ENCODE measurements at regions of chr6 and their contacts with region 1.

Region 1: GRCh38 chr6:41787219-41787917 is at the start of gene TOMM6:
- DNase-seq: peak; percentile 95
- H3K4me3 Mint-ChIP-seq: peak within 1 kb of the TSS; percentile 97
- H3K27ac Mint-ChIP-seq: peak within 1 kb of the TSS; percentile 98
- H3K4me1 Mint-ChIP-seq: peaks cover 10% of the 10 kb centered on the region
- H3K27me3 Mint-ChIP-seq: peaks cover 1% of the 10 kb centered on the region
- total RNA-seq, gene TOMM6: 167 to 202 TPM

Region 2: GRCh38 chr6:41756354-41756753 is 31.0 kb before region 1 on chr6:
- CTCF ChIA-PET with region 1: no interaction called
- POLR2A ChIA-PET with region 1: no interaction called
- DNase-seq: no peak
- H3K4me3 Mint-ChIP-seq: no peak overlapping the region
- H3K27ac Mint-ChIP-seq: no peak overlapping the region
- H3K4me1 Mint-ChIP-seq: no peaks in the 10 kb centered on the region
- H3K27me3 Mint-ChIP-seq: peaks cover 9% of the 10 kb centered on the region

Region 3: GRCh38 chr6:41775293-41776181 is 11.8 kb before region 1 on chr6:
- CTCF ChIA-PET with region 1: interaction called, 49 read pairs
- POLR2A ChIA-PET with region 1: no interaction called
- DNase-seq: peak; percentile 65
- H3K4me3 Mint-ChIP-seq: no peak overlapping the region
- H3K27ac Mint-ChIP-seq: no peak overlapping the region
- H3K4me1 Mint-ChIP-seq: peaks cover 12% of the 10 kb centered on the region
- H3K27me3 Mint-ChIP-seq: peaks cover 3% of the 10 kb centered on the region

Region 4: DNA sequence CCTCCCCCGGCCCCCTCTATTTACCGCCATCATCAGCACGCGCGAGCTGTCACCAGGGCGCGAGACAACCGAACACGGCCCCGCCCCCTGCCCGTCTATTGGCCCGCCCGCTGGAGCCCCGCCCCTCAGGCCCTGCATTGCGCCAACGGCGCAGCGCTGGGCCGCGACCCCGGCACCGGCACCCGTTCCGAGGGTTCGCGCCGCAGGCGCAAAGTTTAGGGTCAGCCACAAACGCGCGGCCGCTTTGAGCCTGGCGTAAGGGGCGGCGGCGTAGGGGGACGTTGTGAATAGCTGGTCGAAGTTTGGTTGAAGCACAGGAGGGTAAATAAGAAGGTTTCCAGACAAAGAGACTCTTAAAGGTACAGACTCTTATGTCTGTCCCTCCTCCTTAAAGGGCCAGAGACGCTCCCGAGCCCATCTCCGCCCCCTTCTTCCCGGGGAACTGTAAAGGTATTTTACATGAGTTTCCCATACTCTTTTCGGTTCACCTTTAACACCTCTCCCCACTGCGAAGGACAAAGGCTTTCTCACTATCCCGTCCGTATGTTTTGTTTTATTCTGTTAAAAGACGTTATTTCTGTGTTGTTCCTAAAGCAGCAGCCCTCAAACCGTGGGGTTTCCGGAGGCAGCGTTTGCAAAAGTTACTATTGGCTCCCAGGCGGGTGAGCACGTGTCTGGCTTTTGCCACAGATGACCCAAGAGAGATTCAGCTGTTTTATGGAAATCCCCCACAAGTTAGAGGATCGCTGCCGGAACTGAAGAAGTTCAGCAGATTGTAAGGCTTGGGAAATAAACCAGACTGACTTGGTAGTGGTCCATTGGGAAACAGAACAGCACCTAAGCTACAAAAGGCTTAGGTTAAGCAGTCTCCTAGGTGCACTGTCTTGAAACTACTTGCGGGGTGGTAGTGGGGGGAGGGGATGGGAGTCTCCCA is 108.2 kb after region 1 on chr6 and contains the start of gene USP49:
- CTCF ChIA-PET with region 1: interaction called, 17 read pairs
- POLR2A ChIA-PET with region 1: no interaction called
- DNase-seq: peak; percentile 92
- H3K4me3 Mint-ChIP-seq: no peak within 1 kb of the TSS
- H3K27ac Mint-ChIP-seq: peak within 1 kb of the TSS; percentile 82
- H3K4me1 Mint-ChIP-seq: peaks cover 16% of the 10 kb centered on the region
- H3K27me3 Mint-ChIP-seq: no peaks in the 10 kb centered on the region
- total RNA-seq, gene USP49: 6.3 to 7.0 TPM

Region 5: GRCh38 chr6:41941280-41942066 is 154.1 kb after region 1 on chr6 and contains the start of gene CCND3:
- CTCF ChIA-PET with region 1: interaction called, 24 read pairs
- POLR2A ChIA-PET with region 1: no interaction called
- DNase-seq: peak; percentile 92
- H3K4me3 Mint-ChIP-seq: peak within 1 kb of the TSS; percentile 100
- H3K27ac Mint-ChIP-seq: peak within 1 kb of the TSS; percentile 97
- H3K4me1 Mint-ChIP-seq: peaks cover 51% of the 10 kb centered on the region
- H3K27me3 Mint-ChIP-seq: no peaks in the 10 kb centered on the region
- total RNA-seq, gene CCND3: 461 to 520 TPM

Region 6: DNA sequence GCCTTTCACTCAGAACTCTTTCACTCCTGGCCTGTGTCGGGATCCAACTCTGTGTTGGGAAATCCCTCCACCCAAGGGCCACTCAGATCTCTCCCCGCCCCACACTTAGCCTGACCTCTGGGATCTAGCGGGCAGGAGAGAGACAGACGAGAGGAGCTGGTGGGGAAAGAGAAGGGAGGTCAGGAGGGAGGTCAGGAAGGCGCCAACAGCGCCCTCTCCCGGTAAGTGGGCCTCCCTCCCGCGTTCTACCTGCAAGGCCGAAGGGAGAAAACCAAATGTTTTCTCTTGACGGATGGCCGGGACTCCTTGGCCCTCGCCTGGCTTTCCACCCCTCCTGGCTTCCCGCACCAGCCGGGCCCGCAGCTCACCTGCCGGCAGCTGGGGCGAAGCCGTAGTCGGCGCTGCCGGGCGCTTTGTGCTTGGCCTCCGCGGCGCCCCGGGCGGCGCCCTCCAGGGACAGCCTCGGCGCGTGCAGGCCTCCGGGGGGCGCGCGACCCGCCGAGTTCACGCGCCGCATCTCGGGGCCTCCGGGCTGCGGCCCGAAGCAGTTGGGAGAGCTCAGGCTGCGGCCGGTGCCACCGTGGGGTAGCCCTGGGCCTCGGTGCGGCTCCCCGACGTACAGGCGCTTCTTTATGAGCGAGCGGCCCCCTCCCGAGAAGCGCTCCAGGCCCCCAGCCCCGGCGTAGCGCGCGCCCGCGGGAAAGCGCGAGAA is 316.9 kb after region 1 on chr6:
- CTCF ChIA-PET with region 1: interaction called, 15 read pairs
- POLR2A ChIA-PET with region 1: no interaction called
- DNase-seq: peak; percentile 67
- H3K4me3 Mint-ChIP-seq: peak overlapping the region; percentile 48
- H3K27ac Mint-ChIP-seq: no peak overlapping the region
- H3K4me1 Mint-ChIP-seq: peaks cover 19% of the 10 kb centered on the region
- H3K27me3 Mint-ChIP-seq: peaks cover 10% of the 10 kb centered on the region